Posterior cingulate gyrus (tissue), 11 donors: ENCODE measurements at regions of chr3 and their contacts with region 1.

Region 1: DNA sequence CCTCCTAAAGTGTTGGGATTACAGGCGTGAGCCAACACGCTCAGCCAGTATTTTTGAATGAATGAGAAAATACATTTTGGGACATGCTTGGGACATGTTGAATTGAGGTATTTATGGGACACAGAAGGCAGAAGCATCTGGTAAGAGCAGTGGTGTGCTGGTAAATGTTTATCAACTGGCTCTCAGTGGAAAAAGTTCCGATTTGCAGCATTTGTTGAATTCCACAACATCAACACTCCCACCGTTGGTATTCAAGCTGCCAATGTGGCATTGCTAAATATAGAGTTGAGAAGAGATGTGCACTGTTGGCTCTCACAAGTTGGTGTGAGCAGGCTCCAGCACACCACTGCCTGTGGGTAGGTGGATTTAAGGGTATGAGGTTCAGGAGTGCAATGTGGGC is 35.8 kb upstream of the LRRFIP2 start:
- DNase-seq: peak in 2 of 10 donors; percentile 9 to 29

Region 2: GRCh38 chr3:36993326-36994283 is 216.6 kb before region 1 on chr3 and contains the start of gene MLH1:
- intact Hi-C with region 1: loop called (anchors 5 kb)
- DNase-seq: peak; percentile 89 to 99 (median 98)